PC-9 (cell line): ENCODE measurements at regions of chr11 and their contacts with region 1.

Region 1: DNA sequence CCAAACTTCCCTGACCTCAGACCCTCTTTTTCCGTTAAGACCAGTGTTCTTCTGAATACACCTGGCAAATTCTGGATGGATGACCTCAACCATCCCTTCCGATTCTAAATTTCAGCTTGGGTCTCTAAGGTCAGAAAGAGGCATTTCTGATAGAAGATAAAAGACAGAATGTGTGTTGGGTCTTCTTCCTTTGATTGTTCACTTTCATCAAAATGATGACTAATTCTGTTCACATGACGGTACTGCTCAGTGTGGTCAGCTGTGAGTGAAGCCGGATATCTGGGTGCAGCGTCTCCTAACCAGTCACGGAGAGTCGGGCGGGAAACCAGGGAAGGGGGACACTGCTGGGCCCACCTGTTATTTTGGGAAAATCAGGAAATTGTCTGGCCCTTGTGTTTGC is 151.6 kb upstream of the NAV2 start:
- DNase-seq: peak in 1 of 2 experiments; percentile 12
- H3K4me3 ChIP-seq: no peak overlapping the region
- H3K27ac ChIP-seq: no peak overlapping the region
- H3K4me1 ChIP-seq: no peaks in the 10 kb centered on the region
- H3K27me3 ChIP-seq: no peaks in the 10 kb centered on the region
- CTCF ChIP-seq: no peak

Region 2: GRCh38 chr11:19419021-19419750 is 141.8 kb before region 1 on chr11:
- CTCF ChIA-PET with region 1: no interaction called
- POLR2A ChIA-PET with region 1: no interaction called
- intact Hi-C with region 1: no loop called
- DNase-seq: peak; percentile 67 to 99
- H3K4me3 ChIP-seq: peak overlapping the region; percentile 52
- H3K27ac ChIP-seq: peak overlapping the region; percentile 97
- H3K4me1 ChIP-seq: peaks cover 33% of the 10 kb centered on the region
- H3K27me3 ChIP-seq: no peaks in the 10 kb centered on the region
- CTCF ChIP-seq: no peak

Region 3: GRCh38 chr11:19742588-19743292 is 181.7 kb after region 1 on chr11:
- CTCF ChIA-PET with region 1: interaction called, 14 read pairs
- POLR2A ChIA-PET with region 1: no interaction called
- intact Hi-C with region 1: loop called (anchors 1 kb)
- DNase-seq: peak; percentile 61 to 79
- H3K4me3 ChIP-seq: no peak overlapping the region
- H3K27ac ChIP-seq: no peak overlapping the region
- H3K4me1 ChIP-seq: peaks cover 6% of the 10 kb centered on the region; the same call in 1 of the 2 replicates
- H3K27me3 ChIP-seq: no peaks in the 10 kb centered on the region
- CTCF ChIP-seq: peak; percentile 94

Region 4: DNA sequence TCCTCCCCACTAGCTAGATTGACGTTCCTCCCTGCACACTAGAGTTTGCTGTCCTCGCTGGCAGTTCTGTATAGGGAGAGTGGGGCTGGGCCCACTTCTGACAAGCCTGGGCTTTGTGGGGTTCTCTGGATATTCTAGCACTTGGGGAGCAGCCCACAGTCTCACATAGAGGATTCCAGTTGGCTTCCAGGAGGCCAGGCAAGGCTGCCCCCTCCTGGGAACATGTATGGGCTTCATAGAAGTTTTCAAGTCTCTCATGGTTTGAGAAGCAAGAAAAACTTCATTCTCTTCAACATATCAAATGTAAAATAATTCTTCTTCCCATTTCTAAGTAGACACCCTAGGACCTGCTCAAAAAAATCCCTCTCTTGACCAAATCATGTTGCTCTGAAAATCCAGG is 239.2 kb after region 1 on chr11:
- CTCF ChIA-PET with region 1: no interaction called
- POLR2A ChIA-PET with region 1: interaction called, 3 read pairs
- intact Hi-C with region 1: loop called (anchors 1 kb)
- DNase-seq: no peak
- H3K4me3 ChIP-seq: no peak overlapping the region
- H3K27ac ChIP-seq: peak overlapping the region; percentile 43
- H3K4me1 ChIP-seq: peaks cover 57% of the 10 kb centered on the region
- H3K27me3 ChIP-seq: no peaks in the 10 kb centered on the region
- CTCF ChIP-seq: no peak; the same call in 1 of the 2 replicates

Region 5: GRCh38 chr11:19808076-19808911 is 247.3 kb after region 1 on chr11:
- CTCF ChIA-PET with region 1: no interaction called
- POLR2A ChIA-PET with region 1: interaction called, 3 read pairs
- intact Hi-C with region 1: loop called (anchors 1 kb)
- DNase-seq: no peak
- H3K4me3 ChIP-seq: no peak overlapping the region
- H3K27ac ChIP-seq: no peak overlapping the region
- H3K4me1 ChIP-seq: peaks cover 24% of the 10 kb centered on the region
- H3K27me3 ChIP-seq: no peaks in the 10 kb centered on the region
- CTCF ChIP-seq: peak; percentile 52

Region 6: DNA sequence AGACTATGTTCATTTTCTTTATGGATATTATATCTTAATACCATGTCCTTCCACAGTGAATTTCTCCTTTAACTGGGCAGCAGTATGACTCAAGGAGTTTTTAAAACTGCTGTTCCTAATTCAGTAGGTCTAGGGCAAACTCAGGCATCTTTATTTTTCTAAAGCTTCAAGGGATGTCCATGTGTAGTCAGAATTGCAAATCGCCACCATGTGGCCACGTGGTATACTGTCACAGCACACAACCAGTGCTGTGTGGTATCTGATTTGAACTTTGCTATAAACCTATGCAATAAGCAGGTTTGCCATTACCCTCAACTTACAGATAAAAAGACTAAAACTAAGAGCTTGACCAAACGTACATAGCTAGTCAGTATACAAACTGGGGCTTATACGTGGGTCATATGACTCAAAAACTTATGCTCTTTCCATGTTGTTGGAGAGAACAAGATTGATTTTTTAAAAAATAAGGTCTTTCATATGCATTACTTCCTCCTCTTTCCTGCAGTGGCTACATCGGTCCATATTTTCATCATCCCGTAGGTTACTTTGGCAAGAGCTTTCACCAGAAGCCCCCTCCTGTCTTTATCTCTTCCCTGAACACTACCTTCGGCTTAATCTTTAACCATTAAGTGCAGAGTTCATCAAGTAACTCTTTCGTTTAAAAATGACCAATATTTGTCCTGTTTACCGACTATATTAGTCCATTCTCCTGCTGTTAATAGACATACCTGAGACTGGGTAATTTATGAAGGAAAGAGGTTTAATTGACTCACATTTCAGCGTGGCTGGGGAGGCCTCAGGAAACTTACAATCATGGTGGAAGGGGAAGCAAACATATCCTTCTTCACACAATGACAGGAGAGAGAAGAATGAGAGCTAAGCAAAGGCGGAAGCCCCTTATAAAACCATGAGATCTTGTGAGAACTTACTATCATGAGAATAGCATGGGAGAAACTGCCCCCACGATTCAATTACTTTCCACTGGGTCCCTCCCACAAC is 794.5 kb after region 1 on chr11:
- CTCF ChIA-PET with region 1: no interaction called
- POLR2A ChIA-PET with region 1: no interaction called
- intact Hi-C with region 1: loop called (anchors 5 kb)
- DNase-seq: peak in 1 of 2 experiments; percentile 46
- H3K4me3 ChIP-seq: no peak overlapping the region
- H3K27ac ChIP-seq: no peak overlapping the region
- H3K4me1 ChIP-seq: no peaks in the 10 kb centered on the region; the same call in 1 of the 2 replicates
- H3K27me3 ChIP-seq: no peaks in the 10 kb centered on the region
- CTCF ChIP-seq: peak; percentile 74